K562 (cell line): ENCODE measurements at regions of chr15 and their contacts with region 1.

Region 1: DNA sequence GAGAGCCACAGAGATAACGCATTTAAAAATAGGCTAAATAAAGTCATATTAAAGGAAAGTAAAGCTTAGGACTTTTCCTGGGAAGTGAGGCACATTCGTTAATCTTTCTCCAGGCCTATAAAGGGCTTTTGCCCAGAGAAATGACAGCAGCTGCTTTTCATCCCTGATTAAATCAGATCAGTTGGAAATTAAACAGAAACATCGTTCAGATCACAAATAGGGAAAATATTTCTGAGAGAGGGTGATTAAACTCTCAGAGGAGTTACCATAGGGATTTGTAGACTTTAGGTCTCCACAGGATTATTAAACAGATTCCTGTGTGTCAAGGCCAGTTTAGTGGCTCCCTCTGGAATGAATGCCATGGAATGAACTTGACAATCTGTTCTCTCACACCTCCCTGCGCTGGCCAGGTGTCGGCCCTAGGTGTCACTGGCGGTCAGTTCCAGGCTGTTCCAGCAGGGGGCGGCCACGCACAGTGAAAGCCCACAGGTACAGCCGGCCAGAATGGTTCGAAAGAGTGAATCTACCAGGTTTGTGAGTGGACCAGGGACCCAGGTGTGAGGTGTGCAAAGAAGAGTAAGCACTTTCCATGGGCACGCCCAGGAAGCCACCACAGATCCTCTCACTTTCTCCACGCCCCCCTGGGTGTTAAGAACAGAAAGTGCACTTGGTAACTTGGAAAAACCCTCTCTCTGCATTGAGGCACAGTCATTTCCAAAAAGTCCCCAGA is 253.0 kb upstream of the RASGRP1 start:
- DNase-seq: peak; percentile 77 to 84 (median 80)
- ATAC-seq: peak; percentile 100
- H3K4me3 ChIP-seq: no peak overlapping the region
- H3K27ac ChIP-seq: no peak overlapping the region
- H3K4me1 ChIP-seq: no peaks in the 10 kb centered on the region
- H3K27me3 ChIP-seq: peaks cover 0 to 5% of the 10 kb centered on the region in 2 experiments; a peak in 2 of 5 replicates
- CTCF ChIP-seq: peak; percentile 99 to 100 (median 99)
- EP300 ChIP-seq: no peak
- POLR2A ChIP-seq: no peak
- RAD21 ChIP-seq: peak; percentile 69 to 90

Region 2: GRCh38 chr15:38853608-38854007 is 36.0 kb after region 1 on chr15:
- CTCF ChIA-PET with region 1: no interaction called
- POLR2A ChIA-PET with region 1: no interaction called
- in situ Hi-C with region 1: no loop called
- intact Hi-C with region 1: loop called (anchors 2 kb)
- DNase-seq: peak in 2 of 4 experiments; percentile 12 to 27
- ATAC-seq: peak; percentile 68; the same call in 2 of the 3 replicates
- H3K4me3 ChIP-seq: no peak overlapping the region
- H3K27ac ChIP-seq: no peak overlapping the region
- H3K4me1 ChIP-seq: no peaks in the 10 kb centered on the region
- H3K27me3 ChIP-seq: no peaks in the 10 kb centered on the region
- CTCF ChIP-seq: peak; percentile 28 to 50 (median 41); a peak in 4 of 6 replicates
- EP300 ChIP-seq: no peak
- POLR2A ChIP-seq: no peak
- RAD21 ChIP-seq: peak; percentile 12 to 27; a peak in 2 of 4 replicates

Region 3: DNA sequence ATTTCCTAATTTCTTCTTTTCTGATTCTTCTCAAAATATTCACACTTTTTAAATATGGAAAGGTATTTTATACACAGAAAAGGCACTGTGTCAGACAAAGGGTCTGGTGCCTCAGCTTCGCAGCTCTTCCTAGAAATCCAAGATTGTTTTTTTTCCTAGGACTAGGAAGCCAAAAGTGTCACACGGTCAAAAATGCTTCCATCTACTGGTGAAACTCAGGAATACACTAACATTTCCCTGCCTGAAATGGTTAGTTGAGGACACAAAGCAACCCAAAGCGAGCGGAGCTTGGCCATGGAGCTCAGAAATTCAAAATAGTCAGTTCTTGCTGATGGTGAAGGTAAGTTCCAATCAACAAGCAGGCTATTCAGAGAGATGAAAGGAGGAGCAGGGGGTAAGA is 173.5 kb after region 1 on chr15:
- CTCF ChIA-PET with region 1: interaction called, 3 read pairs
- POLR2A ChIA-PET with region 1: no interaction called
- in situ Hi-C with region 1: no loop called
- intact Hi-C with region 1: loop called (anchors 5 kb)
- DNase-seq: peak in 2 of 4 experiments; percentile 8 to 9
- ATAC-seq: no peak
- H3K4me3 ChIP-seq: no peak overlapping the region
- H3K27ac ChIP-seq: no peak overlapping the region
- H3K4me1 ChIP-seq: no peaks in the 10 kb centered on the region
- H3K27me3 ChIP-seq: no peaks in the 10 kb centered on the region
- CTCF ChIP-seq: peak in 2 of 3 experiments; percentile 21 to 36; a peak in 2 of 6 replicates
- EP300 ChIP-seq: no peak
- POLR2A ChIP-seq: no peak
- RAD21 ChIP-seq: no peak

Region 4: GRCh38 chr15:39040861-39041260 is 223.3 kb after region 1 on chr15:
- CTCF ChIA-PET with region 1: no interaction called
- POLR2A ChIA-PET with region 1: no interaction called
- in situ Hi-C with region 1: no loop called
- intact Hi-C with region 1: no loop called
- DNase-seq: no peak
- ATAC-seq: no peak
- H3K4me3 ChIP-seq: no peak overlapping the region
- H3K27ac ChIP-seq: no peak overlapping the region
- H3K4me1 ChIP-seq: no peaks in the 10 kb centered on the region
- H3K27me3 ChIP-seq: no peaks in the 10 kb centered on the region
- CTCF ChIP-seq: no peak
- EP300 ChIP-seq: no peak
- POLR2A ChIP-seq: no peak
- RAD21 ChIP-seq: no peak